CD4-positive, alpha-beta T cell (primary cell): ENCODE measurements at regions of chr2 and their contacts with region 1.

Region 1: GRCh38 chr2:28751252-28751955 is at the start of gene PPP1CB:
- DNase-seq: peak; percentile 91 to 100 (median 96)
- ATAC-seq: peak; percentile 84
- H3K4me3 ChIP-seq: peak within 1 kb of the TSS; percentile 92
- H3K4me3 Mint-ChIP-seq: peak within 1 kb of the TSS; percentile 95
- H3K27ac ChIP-seq: peak within 1 kb of the TSS; percentile 98
- H3K27ac Mint-ChIP-seq: peak within 1 kb of the TSS; percentile 95
- H3K4me1 ChIP-seq: peaks cover 56% of the 10 kb centered on the region
- H3K4me1 Mint-ChIP-seq: peaks cover 73% of the 10 kb centered on the region
- H3K27me3 ChIP-seq: no peaks in the 10 kb centered on the region
- H3K27me3 Mint-ChIP-seq: no peaks in the 10 kb centered on the region
- CTCF ChIP-seq: peak; percentile 32
- total RNA-seq, gene PPP1CB: 290 to 304 TPM

Region 2: DNA sequence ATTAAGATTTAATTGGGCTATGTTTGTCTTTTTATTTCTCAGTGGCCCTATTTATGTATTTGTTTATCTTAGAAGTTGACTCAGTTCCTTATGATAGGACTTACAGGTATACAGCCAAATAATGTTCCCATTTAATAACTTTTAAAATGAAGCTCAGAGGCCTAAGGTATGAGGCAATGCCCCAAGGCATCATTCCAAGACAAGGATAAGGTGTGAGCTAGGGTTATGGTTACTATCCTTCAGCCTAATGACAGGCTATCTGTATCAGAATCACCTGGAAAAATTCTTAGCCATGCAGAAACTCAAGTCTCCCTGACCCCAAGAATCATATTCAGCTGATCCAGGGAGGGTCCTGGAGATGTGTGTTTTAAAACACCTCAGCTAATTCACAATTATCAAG is 1330.4 kb before region 1 on chr2:
- CTCF ChIA-PET with region 1: no interaction called
- POLR2A ChIA-PET with region 1: no interaction called
- intact Hi-C with region 1: no loop called
- DNase-seq: no peak
- ATAC-seq: no peak
- H3K4me3 ChIP-seq: no peak overlapping the region
- H3K4me3 Mint-ChIP-seq: no peak overlapping the region
- H3K27ac ChIP-seq: no peak overlapping the region
- H3K27ac Mint-ChIP-seq: no peak overlapping the region
- H3K4me1 ChIP-seq: no peaks in the 10 kb centered on the region
- H3K4me1 Mint-ChIP-seq: no peaks in the 10 kb centered on the region
- H3K27me3 ChIP-seq: no peaks in the 10 kb centered on the region
- H3K27me3 Mint-ChIP-seq: no peaks in the 10 kb centered on the region
- CTCF ChIP-seq: no peak

Region 3: DNA sequence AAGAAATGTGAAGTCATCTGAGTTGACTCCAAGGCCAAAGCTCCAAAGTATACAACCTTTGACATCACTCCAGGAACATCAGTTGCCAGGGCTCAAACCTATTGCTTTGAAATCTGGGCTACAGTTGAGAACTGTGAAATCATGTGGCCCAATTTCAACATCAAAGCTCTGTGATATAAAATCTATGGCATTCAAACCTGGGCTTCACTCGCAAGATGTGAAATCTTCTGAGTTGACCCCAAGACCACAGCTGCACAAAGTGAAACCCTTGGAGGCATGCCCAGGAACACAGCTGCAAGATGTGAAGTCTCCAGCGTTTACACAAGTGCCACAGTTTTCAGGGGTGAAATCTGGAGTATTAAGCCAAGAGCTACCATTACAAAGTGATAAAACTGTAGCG is 1178.0 kb before region 1 on chr2:
- CTCF ChIA-PET with region 1: no interaction called
- POLR2A ChIA-PET with region 1: no interaction called
- intact Hi-C with region 1: no loop called
- DNase-seq: no peak
- ATAC-seq: no peak
- H3K4me3 ChIP-seq: no peak overlapping the region
- H3K4me3 Mint-ChIP-seq: no peak overlapping the region
- H3K27ac ChIP-seq: no peak overlapping the region
- H3K27ac Mint-ChIP-seq: no peak overlapping the region
- H3K4me1 ChIP-seq: no peaks in the 10 kb centered on the region
- H3K4me1 Mint-ChIP-seq: no peaks in the 10 kb centered on the region
- H3K27me3 ChIP-seq: no peaks in the 10 kb centered on the region
- H3K27me3 Mint-ChIP-seq: peaks cover 11% of the 10 kb centered on the region
- CTCF ChIP-seq: no peak

Region 4: GRCh38 chr2:28594289-28595108 is 156.9 kb before region 1 on chr2:
- CTCF ChIA-PET with region 1: interaction called, 54 read pairs
- POLR2A ChIA-PET with region 1: interaction called, 59 read pairs
- intact Hi-C with region 1: loop called (anchors 1 kb)
- DNase-seq: peak; percentile 78 to 96 (median 86)
- ATAC-seq: peak; percentile 86
- H3K4me3 ChIP-seq: peak overlapping the region; percentile 19
- H3K4me3 Mint-ChIP-seq: peak overlapping the region; percentile 52
- H3K27ac ChIP-seq: peak overlapping the region; percentile 50 to 72
- H3K27ac Mint-ChIP-seq: peak overlapping the region; percentile 74
- H3K4me1 ChIP-seq: peaks cover 15% of the 10 kb centered on the region
- H3K4me1 Mint-ChIP-seq: peaks cover 15% of the 10 kb centered on the region
- H3K27me3 ChIP-seq: no peaks in the 10 kb centered on the region
- H3K27me3 Mint-ChIP-seq: no peaks in the 10 kb centered on the region
- CTCF ChIP-seq: peak; percentile 82

Region 5: DNA sequence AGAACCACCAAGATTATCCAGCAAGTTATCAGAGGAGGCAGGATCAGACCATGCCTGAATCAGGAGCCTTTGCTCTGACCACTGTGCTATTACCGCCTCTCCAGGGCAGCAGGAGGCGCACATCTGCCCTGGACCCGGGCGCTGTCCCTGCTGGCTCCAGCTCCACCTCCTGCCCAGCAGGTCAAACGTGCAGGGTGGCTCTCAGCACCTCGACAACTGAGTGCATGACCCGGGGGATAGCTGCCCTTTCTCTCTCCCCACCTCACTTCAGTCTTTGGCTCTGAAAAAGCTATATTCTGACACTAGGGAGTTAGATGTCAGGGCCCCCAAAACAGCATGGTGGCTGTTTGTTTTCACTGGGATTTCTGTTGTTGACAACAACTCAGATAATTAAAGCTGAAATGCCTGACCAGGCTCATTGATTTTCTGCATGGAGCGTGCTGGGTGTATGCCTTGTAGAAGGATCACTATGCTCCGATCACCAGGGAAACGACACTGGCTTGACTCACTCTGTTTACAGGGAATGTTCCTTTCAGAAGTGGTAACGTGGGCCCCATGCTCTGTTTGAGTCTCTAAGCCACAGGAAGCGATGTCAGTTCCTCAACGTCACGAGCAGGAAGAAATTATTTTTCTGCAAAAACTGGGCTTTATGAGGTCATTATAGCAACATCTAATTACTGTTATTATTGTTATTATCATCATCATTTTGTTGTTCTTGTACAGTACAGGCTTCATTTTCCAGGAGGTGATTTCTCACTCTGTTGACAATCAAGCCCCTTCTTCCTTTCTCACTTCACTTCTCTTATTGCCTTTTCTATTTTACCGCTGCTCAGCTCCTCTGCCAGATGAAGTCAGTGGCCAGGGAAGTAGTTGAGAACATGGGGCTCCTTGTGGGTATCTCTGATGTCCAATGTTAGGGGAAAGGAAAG is 130.0 kb before region 1 on chr2:
- CTCF ChIA-PET with region 1: interaction called, 5 read pairs
- POLR2A ChIA-PET with region 1: interaction called, 49 read pairs
- intact Hi-C with region 1: loop called (anchors 1 to 2 kb)
- DNase-seq: peak; percentile 55 to 96 (median 69)
- ATAC-seq: peak; percentile 86
- H3K4me3 ChIP-seq: peak overlapping the region; percentile 15
- H3K4me3 Mint-ChIP-seq: peak overlapping the region; percentile 76
- H3K27ac ChIP-seq: peak overlapping the region; percentile 93 to 98
- H3K27ac Mint-ChIP-seq: no peak overlapping the region
- H3K4me1 ChIP-seq: peaks cover 95% of the 10 kb centered on the region
- H3K4me1 Mint-ChIP-seq: peaks cover 86% of the 10 kb centered on the region
- H3K27me3 ChIP-seq: no peaks in the 10 kb centered on the region
- H3K27me3 Mint-ChIP-seq: no peaks in the 10 kb centered on the region
- CTCF ChIP-seq: no peak

Region 6: DNA sequence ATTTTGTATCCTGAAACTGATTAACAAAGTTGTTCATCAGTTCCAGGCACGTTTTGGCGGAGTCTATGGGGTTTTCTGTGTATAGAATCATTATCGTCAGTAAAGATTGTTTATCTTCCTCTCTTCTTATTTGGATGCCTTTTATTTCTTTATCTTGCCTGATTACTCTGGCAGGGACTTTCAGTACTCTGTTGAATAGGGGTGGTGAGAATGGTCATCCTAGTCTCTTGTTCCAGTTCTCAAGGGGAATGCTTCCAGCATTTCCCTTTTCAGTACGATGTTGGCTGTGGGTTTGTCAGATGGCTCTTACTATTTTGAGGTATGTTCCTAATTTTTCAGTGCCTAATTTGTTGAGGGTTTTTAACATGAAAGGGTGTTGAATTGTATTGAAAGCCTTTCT is 45.2 kb after region 1 on chr2:
- CTCF ChIA-PET with region 1: no interaction called
- POLR2A ChIA-PET with region 1: no interaction called
- intact Hi-C with region 1: loop called in 1 of 2 experiments (anchors 5 kb)
- DNase-seq: no peak
- ATAC-seq: no peak
- H3K4me3 ChIP-seq: no peak overlapping the region
- H3K4me3 Mint-ChIP-seq: no peak overlapping the region
- H3K27ac ChIP-seq: no peak overlapping the region
- H3K27ac Mint-ChIP-seq: no peak overlapping the region
- H3K4me1 ChIP-seq: no peaks in the 10 kb centered on the region
- H3K4me1 Mint-ChIP-seq: peaks cover 39% of the 10 kb centered on the region
- H3K27me3 ChIP-seq: no peaks in the 10 kb centered on the region
- H3K27me3 Mint-ChIP-seq: no peaks in the 10 kb centered on the region
- CTCF ChIP-seq: no peak

Region 7: DNA sequence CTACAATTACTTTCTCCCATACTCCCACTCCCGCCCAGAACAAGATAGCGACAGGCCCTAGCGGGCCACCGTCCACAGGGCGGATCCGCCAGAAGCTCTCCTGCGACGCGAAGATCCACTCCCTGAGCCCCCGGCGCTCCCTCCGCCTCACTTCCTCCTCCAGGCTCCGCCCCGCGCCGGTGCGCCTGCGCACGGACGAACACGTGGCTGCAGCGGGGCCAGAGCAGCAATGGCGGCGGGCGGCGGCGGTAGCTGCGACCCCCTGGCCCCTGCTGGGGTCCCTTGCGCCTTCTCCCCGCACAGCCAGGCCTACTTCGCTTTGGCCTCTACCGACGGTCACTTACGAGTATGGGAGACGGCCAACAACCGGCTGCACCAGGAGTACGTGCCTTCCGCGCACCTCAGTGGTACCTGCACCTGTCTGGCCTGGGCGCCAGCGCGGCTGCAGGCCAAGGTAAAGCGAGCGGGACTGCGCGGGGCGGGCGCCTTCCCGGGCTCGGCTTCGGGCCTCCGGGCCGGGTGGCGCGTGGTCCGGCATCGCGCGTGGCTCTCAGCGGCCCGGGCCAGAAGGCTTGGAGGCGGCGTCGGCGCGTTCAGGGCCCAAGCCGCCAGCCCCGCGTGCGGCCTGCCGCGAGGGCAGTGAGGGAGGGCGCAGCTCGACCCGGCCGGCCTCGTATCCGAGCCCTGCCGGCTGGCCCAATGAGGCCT is 143.2 kb after region 1 on chr2 and contains the start of gene WDR43:
- CTCF ChIA-PET with region 1: no interaction called
- POLR2A ChIA-PET with region 1: interaction called, 8 read pairs
- intact Hi-C with region 1: loop called in 1 of 2 experiments (anchors 2 kb)
- DNase-seq: peak; percentile 90 to 99 (median 97)
- ATAC-seq: peak; percentile 97
- H3K4me3 ChIP-seq: peak within 1 kb of the TSS; percentile 89
- H3K4me3 Mint-ChIP-seq: peak within 1 kb of the TSS; percentile 97
- H3K27ac ChIP-seq: peak within 1 kb of the TSS; percentile 55 to 59
- H3K27ac Mint-ChIP-seq: peak within 1 kb of the TSS; percentile 91
- H3K4me1 ChIP-seq: peaks cover 24% of the 10 kb centered on the region
- H3K4me1 Mint-ChIP-seq: peaks cover 49% of the 10 kb centered on the region
- H3K27me3 ChIP-seq: no peaks in the 10 kb centered on the region
- H3K27me3 Mint-ChIP-seq: no peaks in the 10 kb centered on the region
- CTCF ChIP-seq: no peak
- total RNA-seq, gene WDR43: 62.4 to 73.2 TPM

Region 8: DNA sequence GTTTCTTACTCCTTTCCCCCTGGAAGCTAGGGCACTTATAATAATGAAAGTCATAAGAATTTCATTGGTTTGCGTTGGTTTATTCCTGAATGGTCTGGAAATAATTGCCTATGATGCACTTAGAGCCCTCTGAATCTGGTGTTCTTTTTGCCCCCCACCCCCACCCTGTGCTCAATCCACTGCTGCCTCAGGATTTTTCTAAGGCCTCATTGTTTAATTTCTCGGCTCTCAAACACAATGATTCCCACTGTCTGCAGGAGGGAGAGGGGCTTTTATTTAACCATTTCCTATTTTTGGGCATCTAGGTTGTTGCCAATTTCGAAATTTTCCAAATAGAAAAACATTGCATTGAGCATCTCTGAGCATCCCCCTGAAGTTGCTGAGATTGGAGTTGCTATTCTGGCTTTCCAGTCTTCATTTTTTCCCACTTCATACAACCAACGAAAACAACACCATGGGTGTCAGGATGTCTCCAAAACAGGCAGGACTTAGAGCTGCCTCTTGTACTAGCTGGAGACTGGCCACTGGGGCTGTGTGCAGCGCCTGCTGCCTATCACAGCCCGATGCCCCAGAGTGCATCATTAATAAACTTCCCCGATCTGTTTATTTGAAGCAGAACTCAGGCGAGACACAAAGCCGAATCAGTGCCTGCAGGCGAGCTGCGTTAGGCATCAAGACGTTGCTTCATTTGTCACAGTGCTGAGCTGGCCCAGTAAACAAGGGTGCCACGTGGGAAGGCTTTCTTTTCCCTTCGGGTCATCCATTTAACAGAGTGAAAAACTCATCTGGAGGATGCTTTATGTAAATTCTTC is 324.7 kb after region 1 on chr2:
- CTCF ChIA-PET with region 1: no interaction called
- POLR2A ChIA-PET with region 1: no interaction called
- intact Hi-C with region 1: no loop called
- DNase-seq: no peak
- ATAC-seq: no peak
- H3K4me3 ChIP-seq: no peak overlapping the region
- H3K4me3 Mint-ChIP-seq: no peak overlapping the region
- H3K27ac ChIP-seq: no peak overlapping the region
- H3K27ac Mint-ChIP-seq: no peak overlapping the region
- H3K4me1 ChIP-seq: no peaks in the 10 kb centered on the region
- H3K4me1 Mint-ChIP-seq: no peaks in the 10 kb centered on the region
- H3K27me3 ChIP-seq: no peaks in the 10 kb centered on the region
- H3K27me3 Mint-ChIP-seq: no peaks in the 10 kb centered on the region
- CTCF ChIP-seq: no peak